Caco-2 (cell line): ENCODE measurements at regions of chrX and their contacts with region 1.

Region 1: GRCh38 chrX:44872817-44873414 is at the start of gene KDM6A:
- DNase-seq: peak; percentile 97 to 98
- H3K4me3 ChIP-seq: peak within 1 kb of the TSS; percentile 69
- H3K4me3 Mint-ChIP-seq: peak within 1 kb of the TSS; percentile 74
- H3K27ac Mint-ChIP-seq: peak within 1 kb of the TSS; percentile 91
- H3K4me1 ChIP-seq: no peaks in the 10 kb centered on the region
- H3K4me1 Mint-ChIP-seq: no peaks in the 10 kb centered on the region
- H3K27me3 ChIP-seq: no peaks in the 10 kb centered on the region
- H3K27me3 Mint-ChIP-seq: no peaks in the 10 kb centered on the region
- CTCF ChIP-seq: no peak
- total RNA-seq, gene KDM6A: 34.2 and 44.1 TPM in 2 replicates

Region 2: GRCh38 chrX:44542567-44543325 is 330.2 kb before region 1 on chrX and contains the start of gene FUNDC1:
- CTCF ChIA-PET with region 1: no interaction called
- POLR2A ChIA-PET with region 1: interaction called, 14 read pairs
- intact Hi-C with region 1: no loop called
- DNase-seq: peak; percentile 94 to 95
- H3K4me3 ChIP-seq: peak within 1 kb of the TSS; percentile 73
- H3K4me3 Mint-ChIP-seq: peak within 1 kb of the TSS; percentile 93
- H3K27ac Mint-ChIP-seq: peak within 1 kb of the TSS; percentile 99
- H3K4me1 ChIP-seq: peaks cover 14% of the 10 kb centered on the region
- H3K4me1 Mint-ChIP-seq: peaks cover 7% of the 10 kb centered on the region
- H3K27me3 ChIP-seq: no peaks in the 10 kb centered on the region
- H3K27me3 Mint-ChIP-seq: no peaks in the 10 kb centered on the region
- CTCF ChIP-seq: peak in 1 of 2 experiments; percentile 34
- total RNA-seq, gene FUNDC1: 18.6 and 21.5 TPM in 2 replicates

Region 3: DNA sequence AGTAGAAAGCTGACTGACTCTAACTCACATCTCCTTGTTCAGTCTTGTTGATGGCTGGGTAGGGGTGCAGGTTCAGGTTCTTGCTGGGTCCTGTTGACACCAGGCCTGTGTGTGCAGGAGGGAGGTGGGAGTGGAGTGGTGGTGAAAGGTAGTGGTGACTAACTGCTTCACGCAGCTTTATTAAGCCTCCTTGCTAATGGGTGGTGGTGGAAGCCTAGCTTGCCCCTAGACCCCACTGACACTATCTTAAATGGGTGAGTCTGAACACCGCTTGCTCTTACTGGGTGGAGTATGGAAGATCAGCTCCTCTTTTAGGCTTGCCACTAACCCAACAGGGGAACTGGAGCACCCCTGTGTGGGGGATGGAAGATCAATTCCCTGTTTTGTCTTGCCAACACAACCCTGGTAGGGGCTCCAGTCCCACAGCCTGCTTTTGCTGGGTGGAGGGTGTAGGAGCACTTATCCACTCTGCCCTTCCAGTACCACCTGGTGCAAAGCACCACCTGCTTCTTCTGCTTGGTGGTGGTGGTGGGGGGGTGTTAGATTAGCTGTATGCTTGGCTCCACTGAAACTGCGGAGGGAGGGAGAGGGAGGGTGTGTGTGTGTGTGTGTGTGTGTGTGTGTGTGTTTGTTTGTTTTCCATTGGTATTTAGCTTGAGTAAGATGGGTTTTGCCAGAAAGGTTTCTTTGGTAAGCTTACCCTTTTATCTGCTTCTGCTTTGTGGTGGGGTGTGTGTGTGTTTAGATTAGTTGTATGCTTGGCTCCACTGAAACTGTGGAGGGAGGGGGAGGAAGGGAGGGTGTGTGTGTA is 25.7 kb after region 1 on chrX:
- CTCF ChIA-PET with region 1: interaction called, 3 read pairs
- POLR2A ChIA-PET with region 1: interaction called, 14 read pairs
- intact Hi-C with region 1: no loop called
- DNase-seq: peak in 1 of 2 experiments; percentile 7
- H3K4me3 ChIP-seq: no peak overlapping the region
- H3K4me3 Mint-ChIP-seq: peak overlapping the region; percentile 22
- H3K27ac Mint-ChIP-seq: no peak overlapping the region
- H3K4me1 ChIP-seq: no peaks in the 10 kb centered on the region
- H3K4me1 Mint-ChIP-seq: peaks cover 12% of the 10 kb centered on the region
- H3K27me3 ChIP-seq: no peaks in the 10 kb centered on the region
- H3K27me3 Mint-ChIP-seq: no peaks in the 10 kb centered on the region
- CTCF ChIP-seq: no peak

Region 4: GRCh38 chrX:44953734-44954502 is 81.0 kb after region 1 on chrX:
- CTCF ChIA-PET with region 1: no interaction called
- POLR2A ChIA-PET with region 1: no interaction called
- intact Hi-C with region 1: loop called (anchors 10 kb)
- DNase-seq: no peak
- H3K4me3 ChIP-seq: no peak overlapping the region
- H3K4me3 Mint-ChIP-seq: peak overlapping the region; percentile 23
- H3K27ac Mint-ChIP-seq: peak overlapping the region; percentile 34
- H3K4me1 ChIP-seq: peaks cover 13% of the 10 kb centered on the region; the same call in 1 of the 2 replicates
- H3K4me1 Mint-ChIP-seq: peaks cover 30% of the 10 kb centered on the region
- H3K27me3 ChIP-seq: no peaks in the 10 kb centered on the region
- H3K27me3 Mint-ChIP-seq: no peaks in the 10 kb centered on the region
- CTCF ChIP-seq: no peak

Region 5: GRCh38 chrX:45070116-45071007 is 197.4 kb after region 1 on chrX:
- CTCF ChIA-PET with region 1: no interaction called
- POLR2A ChIA-PET with region 1: no interaction called
- intact Hi-C with region 1: loop called (anchors 5 kb)
- DNase-seq: peak in 1 of 2 experiments; percentile 23
- H3K4me3 ChIP-seq: no peak overlapping the region
- H3K4me3 Mint-ChIP-seq: no peak overlapping the region
- H3K27ac Mint-ChIP-seq: no peak overlapping the region
- H3K4me1 ChIP-seq: no peaks in the 10 kb centered on the region
- H3K4me1 Mint-ChIP-seq: peaks cover 1% of the 10 kb centered on the region
- H3K27me3 ChIP-seq: no peaks in the 10 kb centered on the region
- H3K27me3 Mint-ChIP-seq: no peaks in the 10 kb centered on the region
- CTCF ChIP-seq: peak; percentile 31 to 55